K562 (cell line): ENCODE measurements at regions of chr12 and their contacts with region 1.

Region 1: DNA sequence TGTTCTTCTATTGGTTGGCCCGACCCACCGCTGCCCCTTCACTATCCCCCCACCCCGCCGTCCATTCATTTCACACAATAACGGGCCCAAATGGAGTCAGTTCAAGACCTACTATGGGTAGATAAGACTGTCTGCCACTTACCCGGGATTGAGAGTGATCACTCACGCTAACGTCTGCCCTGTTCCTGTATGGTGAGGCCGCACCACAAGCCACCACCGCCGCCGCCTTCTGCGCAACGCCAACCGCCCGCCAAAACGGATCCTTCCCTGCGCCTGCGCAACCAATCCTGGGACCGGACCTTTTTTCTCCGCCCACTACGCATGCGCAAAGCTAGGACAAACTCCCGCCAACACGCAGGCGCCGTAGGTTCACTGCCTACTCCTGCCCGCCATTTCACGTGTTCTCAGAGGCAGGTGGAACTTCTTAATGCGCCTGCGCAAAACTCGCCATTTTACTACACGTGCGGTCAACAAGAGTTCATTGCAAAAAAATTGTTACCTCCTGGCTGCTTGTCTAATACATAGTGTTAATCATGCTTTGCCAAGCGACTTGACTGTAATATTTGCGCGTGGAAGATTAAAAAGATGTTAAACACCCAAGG is at the start of gene CBX5:
- DNase-seq: peak; percentile 97 to 99 (median 98)
- ATAC-seq: peak; percentile 50
- H3K4me3 ChIP-seq: peak within 1 kb of the TSS; percentile 71
- H3K27ac ChIP-seq: peak within 1 kb of the TSS; percentile 99
- H3K4me1 ChIP-seq: peaks cover 8 to 14% of the 10 kb centered on the region in 2 experiments; a peak in 3 of 5 replicates
- H3K27me3 ChIP-seq: no peaks in the 10 kb centered on the region
- CTCF ChIP-seq: no peak
- EP300 ChIP-seq: no peak
- POLR2A ChIP-seq: peak; percentile 86
- RAD21 ChIP-seq: no peak; a peak in 1 of 4 replicates
- polyA plus RNA-seq, gene CBX5: 49.8 to 53.2 TPM

Region 2: GRCh38 chr12:54220092-54220557 is 59.8 kb before region 1 on chr12:
- CTCF ChIA-PET with region 1: no interaction called
- POLR2A ChIA-PET with region 1: interaction called, 18 read pairs
- in situ Hi-C with region 1: no loop called
- intact Hi-C with region 1: loop called (anchors 5 kb)
- DNase-seq: peak; percentile 75 to 88 (median 78)
- ATAC-seq: peak; percentile 81
- H3K4me3 ChIP-seq: no peak overlapping the region
- H3K27ac ChIP-seq: peak overlapping the region; percentile 66
- H3K4me1 ChIP-seq: peaks cover 29 to 34% of the 10 kb centered on the region in 2 experiments; a peak in 4 of 5 replicates
- H3K27me3 ChIP-seq: no peaks in the 10 kb centered on the region
- CTCF ChIP-seq: peak; percentile 91 to 94 (median 93)
- EP300 ChIP-seq: no peak
- POLR2A ChIP-seq: no peak
- RAD21 ChIP-seq: peak; percentile 95 to 98

Region 3: GRCh38 chr12:54294152-54294952 is 14.4 kb after region 1 on chr12:
- CTCF ChIA-PET with region 1: interaction called, 5 read pairs
- POLR2A ChIA-PET with region 1: interaction called, 155 read pairs
- in situ Hi-C with region 1: no loop called
- intact Hi-C with region 1: no loop called
- DNase-seq: peak; percentile 80 to 93 (median 83)
- ATAC-seq: peak; percentile 34
- H3K4me3 ChIP-seq: peak overlapping the region; percentile 53
- H3K27ac ChIP-seq: peak overlapping the region; percentile 84
- H3K4me1 ChIP-seq: peaks cover 34 to 38% of the 10 kb centered on the region in 2 experiments; a peak in 4 of 5 replicates
- H3K27me3 ChIP-seq: no peaks in the 10 kb centered on the region; a peak in 1 of 5 replicates
- CTCF ChIP-seq: peak; percentile 92 to 96 (median 93)
- EP300 ChIP-seq: peak; percentile 80
- POLR2A ChIP-seq: no peak
- RAD21 ChIP-seq: peak; percentile 92 to 94

Region 4: GRCh38 chr12:54324617-54325441 is 44.9 kb after region 1 on chr12 and contains the start of gene COPZ1:
- CTCF ChIA-PET with region 1: interaction called, 5 read pairs
- POLR2A ChIA-PET with region 1: interaction called, 47 read pairs
- in situ Hi-C with region 1: no loop called
- intact Hi-C with region 1: no loop called
- DNase-seq: peak; percentile 89 to 99 (median 93)
- ATAC-seq: peak; percentile 90
- H3K4me3 ChIP-seq: peak within 1 kb of the TSS; percentile 70
- H3K27ac ChIP-seq: peak within 1 kb of the TSS; percentile 96
- H3K4me1 ChIP-seq: peaks cover 31 to 44% of the 10 kb centered on the region in 2 experiments; a peak in 4 of 5 replicates
- H3K27me3 ChIP-seq: no peaks in the 10 kb centered on the region
- CTCF ChIP-seq: peak; percentile 84 to 98 (median 87)
- EP300 ChIP-seq: peak; percentile 67
- POLR2A ChIP-seq: peak; percentile 97
- RAD21 ChIP-seq: peak; percentile 91 to 94
- polyA plus RNA-seq, gene COPZ1: 437 to 487 TPM

Region 5: GRCh38 chr12:54368709-54369583 is 89.0 kb after region 1 on chr12:
- CTCF ChIA-PET with region 1: interaction called, 3 read pairs
- POLR2A ChIA-PET with region 1: interaction called, 11 read pairs
- in situ Hi-C with region 1: no loop called
- intact Hi-C with region 1: no loop called
- DNase-seq: peak; percentile 76 to 96 (median 83)
- ATAC-seq: peak; percentile 85
- H3K4me3 ChIP-seq: peak overlapping the region; percentile 22; the same call in 1 of the 2 replicates
- H3K27ac ChIP-seq: peak overlapping the region; percentile 87
- H3K4me1 ChIP-seq: peaks cover 38 to 42% of the 10 kb centered on the region in 2 experiments
- H3K27me3 ChIP-seq: no peaks in the 10 kb centered on the region
- CTCF ChIP-seq: peak; percentile 96 to 97 (median 96)
- EP300 ChIP-seq: no peak
- POLR2A ChIP-seq: peak; percentile 53
- RAD21 ChIP-seq: peak; percentile 84 to 92

Region 6: GRCh38 chr12:54475537-54475936 is 195.6 kb after region 1 on chr12:
- CTCF ChIA-PET with region 1: no interaction called
- POLR2A ChIA-PET with region 1: no interaction called
- in situ Hi-C with region 1: no loop called
- intact Hi-C with region 1: no loop called
- DNase-seq: no peak
- ATAC-seq: no peak
- H3K4me3 ChIP-seq: no peak overlapping the region
- H3K27ac ChIP-seq: peak overlapping the region; percentile 9; the same call in 1 of the 3 replicates
- H3K4me1 ChIP-seq: peaks cover 4 to 23% of the 10 kb centered on the region in 2 experiments; a peak in 4 of 5 replicates
- H3K27me3 ChIP-seq: no peaks in the 10 kb centered on the region
- CTCF ChIP-seq: no peak
- EP300 ChIP-seq: no peak
- POLR2A ChIP-seq: no peak
- RAD21 ChIP-seq: no peak